ENCODE measurements at regions of chr12 and their contacts with region 1.

Region 1: GRCh38 chr12:116277393-116278278 is at the start of gene MED13L:
- DNase-seq: peak; percentile 90 to 96 (median 93)
- ATAC-seq: peak; percentile 88 to 97 (median 93)
- H3K4me3 ChIP-seq: peak within 1 kb of the TSS; percentile 71 to 95 (median 88)
- H3K27ac ChIP-seq: peak within 1 kb of the TSS; percentile 90 to 99 (median 95)
- H3K4me1 ChIP-seq: peaks cover 0 to 63% (median 29%) of the 10 kb centered on the region in 12 donors
- H3K27me3 ChIP-seq: no peaks in the 10 kb centered on the region
- CTCF ChIP-seq: peak in 10 of 12 donors; percentile 13 to 67 (median 51)
- POLR2A ChIP-seq: peak in 1 of 2 donors; percentile 38
- total RNA-seq, gene MED13L: 48.6 to 84.1 (median 68.7) TPM

Region 2: DNA sequence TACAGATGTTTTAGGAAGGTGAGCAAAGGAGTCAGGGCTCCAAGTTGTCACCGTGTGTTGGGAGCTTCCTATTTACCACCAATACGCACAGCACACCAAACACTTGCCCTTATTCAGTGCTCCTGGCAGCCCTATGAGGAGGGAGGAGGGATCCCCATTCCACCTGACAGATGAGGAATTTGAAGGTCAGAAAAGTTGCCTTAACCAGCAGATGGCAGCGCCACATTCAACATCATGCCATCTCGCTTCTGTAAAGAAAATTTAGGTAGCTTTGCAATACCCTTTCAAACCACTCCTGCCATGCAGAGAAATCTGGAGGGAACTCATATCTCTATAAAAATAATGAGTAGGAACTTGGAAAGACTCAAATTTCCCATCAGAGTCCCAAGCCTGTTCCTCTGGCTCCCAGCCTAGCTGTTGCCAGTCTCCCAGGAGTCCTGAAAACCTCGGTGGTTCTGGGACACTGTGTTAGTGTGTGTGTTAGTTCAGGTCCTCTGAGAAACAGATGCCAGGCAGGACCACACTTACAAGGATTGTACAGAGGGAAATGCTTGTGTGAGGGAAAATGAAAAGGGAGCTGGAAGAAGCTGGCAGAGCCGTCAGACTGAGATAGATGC is 410.6 kb before region 1 on chr12:
- intact Hi-C with region 1: no loop called
- DNase-seq: no peak
- ATAC-seq: no peak
- H3K4me3 ChIP-seq: no peak overlapping the region
- H3K27ac ChIP-seq: no peak overlapping the region
- H3K4me1 ChIP-seq: peaks cover 0 to 18% (median 0%) of the 10 kb centered on the region in 12 donors
- H3K27me3 ChIP-seq: no peaks in the 10 kb centered on the region
- CTCF ChIP-seq: peak in 2 of 12 donors; percentile 5 to 27
- POLR2A ChIP-seq: no peak

Region 3: DNA sequence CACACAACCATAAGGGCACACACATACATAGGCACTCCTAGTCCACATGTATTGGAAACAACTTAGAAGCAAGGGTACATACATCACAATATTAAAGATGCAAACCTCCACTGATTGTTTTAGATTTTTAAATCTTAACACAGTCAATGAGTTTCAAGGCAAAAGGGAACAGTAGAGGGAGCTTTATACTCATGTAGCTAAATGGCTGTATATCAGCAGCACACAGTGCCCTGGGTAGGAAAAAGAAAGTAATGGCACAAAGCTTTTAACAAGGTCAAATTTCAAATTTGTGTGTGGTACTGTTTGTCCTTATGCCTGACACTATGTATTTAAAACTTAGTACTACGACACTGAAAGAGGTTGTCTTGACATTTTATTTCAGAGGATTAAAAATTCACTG is 262.1 kb before region 1 on chr12:
- intact Hi-C with region 1: loop called in 1 of 10 experiments (anchors 5 kb)
- DNase-seq: no peak
- ATAC-seq: peak; percentile 62 to 86 (median 78)
- H3K4me3 ChIP-seq: no peak overlapping the region
- H3K27ac ChIP-seq: no peak overlapping the region
- H3K4me1 ChIP-seq: peaks cover 0 to 16% (median 10%) of the 10 kb centered on the region in 12 donors
- H3K27me3 ChIP-seq: no peaks in the 10 kb centered on the region
- CTCF ChIP-seq: peak; percentile 20 to 78 (median 58)
- POLR2A ChIP-seq: no peak

Region 4: DNA sequence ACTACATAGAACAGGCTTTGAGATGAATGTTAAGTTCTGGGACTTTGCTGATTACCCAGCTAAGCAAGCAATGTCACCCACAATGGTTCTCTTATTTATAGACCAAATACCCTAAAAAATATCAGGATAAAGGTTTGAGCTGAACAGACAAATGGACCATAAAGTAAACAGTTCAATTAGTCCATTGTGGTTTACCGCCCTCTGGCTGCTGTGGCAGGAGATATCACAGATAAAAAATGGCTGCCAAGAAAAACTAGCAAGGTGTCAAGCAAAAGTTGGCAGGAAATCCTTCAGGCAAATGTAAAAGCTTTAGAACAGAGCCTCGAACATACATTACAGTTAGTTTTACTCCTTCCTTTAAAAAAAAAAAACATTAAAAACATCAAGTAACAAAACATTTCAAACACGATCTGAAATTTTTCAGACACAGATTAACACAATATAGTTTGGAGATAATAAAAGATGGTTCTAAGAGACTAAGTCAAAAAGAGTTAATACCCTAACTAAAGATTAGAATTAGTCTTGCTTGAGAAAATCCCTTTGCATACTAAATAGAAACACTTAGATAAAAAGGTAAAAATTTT is 41.4 kb before region 1 on chr12:
- intact Hi-C with region 1: loop called in 1 of 10 experiments (anchors 5 kb)
- DNase-seq: peak in 4 of 5 donors; percentile 42 to 50 (median 46)
- ATAC-seq: peak; percentile 25 to 84 (median 64)
- H3K4me3 ChIP-seq: no peak overlapping the region
- H3K27ac ChIP-seq: peak overlapping the region in 3 of 12 donors; percentile 14 to 18 (median 15)
- H3K4me1 ChIP-seq: peaks cover 0 to 60% (median 37%) of the 10 kb centered on the region in 12 donors
- H3K27me3 ChIP-seq: no peaks in the 10 kb centered on the region
- CTCF ChIP-seq: peak; percentile 54 to 85 (median 74)
- POLR2A ChIP-seq: no peak

Region 5: DNA sequence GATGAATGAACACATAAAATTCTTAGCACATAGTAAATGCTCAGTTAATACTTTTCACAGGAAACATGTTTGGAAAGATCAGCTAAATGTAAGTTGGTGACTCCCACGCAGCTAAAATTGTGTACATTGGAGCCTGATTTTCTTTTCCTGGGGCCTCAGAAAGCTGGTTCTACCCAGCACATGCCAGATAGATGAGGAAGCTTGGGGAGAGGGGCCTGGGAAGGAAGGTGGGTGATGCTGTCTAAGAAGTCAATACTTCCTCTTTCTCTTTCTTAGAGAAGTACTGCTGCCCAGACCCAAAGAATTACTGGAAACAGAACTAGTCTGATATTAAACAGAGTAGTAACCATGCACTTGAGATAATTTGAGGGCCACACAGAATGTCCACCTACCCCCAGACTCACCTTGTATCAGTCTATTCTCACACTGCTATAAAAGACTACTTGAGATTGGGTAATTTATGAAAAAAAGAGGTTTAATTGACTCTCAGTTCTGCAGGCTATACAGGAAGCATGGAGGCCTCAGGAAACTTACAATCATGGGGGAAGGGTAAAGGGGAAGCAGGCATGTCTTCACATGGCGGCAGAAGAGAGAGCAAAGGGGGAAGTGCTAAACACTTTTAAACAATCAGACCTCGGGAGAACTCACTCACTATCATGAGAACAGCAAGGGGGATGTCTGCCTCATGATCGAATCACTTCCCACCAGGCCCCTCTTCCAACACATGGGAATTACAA is 123.2 kb after region 1 on chr12:
- intact Hi-C with region 1: loop called in 1 of 10 experiments (anchors 5 kb)
- DNase-seq: no peak
- ATAC-seq: peak in 3 of 4 donors; percentile 41 to 70 (median 64)
- H3K4me3 ChIP-seq: no peak overlapping the region
- H3K27ac ChIP-seq: peak overlapping the region in 1 of 12 donors; percentile 65
- H3K4me1 ChIP-seq: peaks cover 0 to 9% (median 0%) of the 10 kb centered on the region in 12 donors
- H3K27me3 ChIP-seq: no peaks in the 10 kb centered on the region
- CTCF ChIP-seq: no peak
- POLR2A ChIP-seq: no peak

Region 6: DNA sequence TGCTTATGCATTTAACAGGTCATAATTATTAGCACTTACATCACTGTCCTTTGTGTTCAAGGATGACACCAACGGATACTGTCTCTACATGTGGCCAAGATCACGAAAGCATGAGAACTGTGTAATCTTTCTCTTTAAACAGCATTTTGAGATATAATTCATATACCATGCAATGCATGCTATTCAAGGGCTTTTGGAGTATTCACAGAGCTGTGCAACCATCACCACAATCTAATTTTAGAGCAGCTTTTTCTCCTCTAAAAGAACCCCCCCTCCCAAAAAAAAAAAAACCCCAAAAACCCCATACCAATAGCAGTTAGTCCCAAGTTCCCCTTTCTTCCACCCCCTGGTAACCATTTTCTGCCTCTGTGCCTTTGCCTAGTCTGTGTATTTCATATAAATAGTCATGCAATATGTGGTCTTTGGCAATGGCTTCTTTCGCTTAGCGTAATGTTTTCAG is 399.6 kb after region 1 on chr12:
- intact Hi-C with region 1: loop called in 2 of 10 experiments (anchors 5 to 10 kb)
- DNase-seq: no peak
- ATAC-seq: peak in 1 of 4 donors; percentile 3
- H3K4me3 ChIP-seq: no peak overlapping the region
- H3K27ac ChIP-seq: peak overlapping the region in 7 of 12 donors; percentile 9 to 66 (median 58)
- H3K4me1 ChIP-seq: peaks cover 0 to 46% (median 18%) of the 10 kb centered on the region in 12 donors
- H3K27me3 ChIP-seq: no peaks in the 10 kb centered on the region
- CTCF ChIP-seq: no peak
- POLR2A ChIP-seq: no peak

Region 7: DNA sequence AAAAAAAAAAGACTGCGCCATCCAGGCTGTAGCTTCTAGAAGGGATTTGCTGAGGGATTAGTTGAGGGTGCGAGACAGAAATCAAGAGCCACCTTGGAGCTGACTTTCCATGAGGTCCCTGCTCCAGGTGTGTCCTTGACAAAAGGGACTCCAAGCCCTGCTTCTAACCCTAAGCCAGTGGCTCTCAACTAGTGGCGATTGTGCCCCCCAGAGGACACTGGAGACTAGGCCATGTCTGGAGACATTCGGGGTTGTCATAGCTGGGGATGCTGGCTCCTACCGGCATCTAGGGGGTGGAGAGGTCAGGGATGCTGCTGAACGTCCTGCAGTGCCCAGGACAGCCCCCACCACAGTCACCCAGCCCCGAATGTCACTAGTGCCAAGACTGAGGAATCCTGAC is 419.7 kb after region 1 on chr12:
- intact Hi-C with region 1: loop called in 2 of 10 experiments (anchors 5 to 10 kb)
- DNase-seq: peak in 2 of 5 donors; percentile 37 to 45
- ATAC-seq: peak in 3 of 4 donors; percentile 10 to 53 (median 16)
- H3K4me3 ChIP-seq: no peak overlapping the region
- H3K27ac ChIP-seq: no peak overlapping the region
- H3K4me1 ChIP-seq: peaks cover 0 to 43% (median 24%) of the 10 kb centered on the region in 12 donors
- H3K27me3 ChIP-seq: peaks cover 0 to 28% (median 8%) of the 10 kb centered on the region in 9 donors
- CTCF ChIP-seq: peak in 10 of 12 donors; percentile 6 to 47 (median 26)
- POLR2A ChIP-seq: no peak

Measured in heart left ventricle (tissue), 16 donors.